Calu3 (cell line): ENCODE measurements at regions of chr20 and their contacts with region 1.

Region 1: DNA sequence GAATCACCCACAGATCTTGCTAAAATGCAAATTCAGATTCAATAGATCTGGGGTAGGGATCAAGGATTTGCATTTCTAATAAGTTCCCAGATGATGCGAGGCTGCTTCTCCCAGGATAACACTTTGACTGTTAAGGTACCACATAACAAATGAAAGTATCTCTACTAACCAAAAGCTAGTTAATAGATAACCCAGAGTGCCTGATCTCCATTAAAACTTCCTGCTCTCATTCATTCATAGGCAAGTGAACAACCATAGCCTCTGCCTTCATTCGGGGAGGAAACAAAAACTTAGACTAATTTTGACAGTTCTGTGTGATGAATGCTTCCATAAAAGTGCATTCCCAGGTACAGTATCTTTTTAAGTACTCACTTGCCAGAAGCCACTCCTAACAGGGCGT is 265.6 kb upstream of the BTBD3 start:
- DNase-seq: no peak
- H3K4me3 Mint-ChIP-seq: no peak overlapping the region
- H3K27ac Mint-ChIP-seq: no peak overlapping the region
- H3K4me1 Mint-ChIP-seq: peaks cover 13% of the 10 kb centered on the region
- H3K27me3 Mint-ChIP-seq: no peaks in the 10 kb centered on the region
- CTCF ChIP-seq: no peak

Region 2: GRCh38 chr20:12482661-12483060 is 830.5 kb after region 1 on chr20:
- CTCF ChIA-PET with region 1: interaction called, 13 read pairs
- intact Hi-C with region 1: no loop called
- DNase-seq: no peak
- H3K4me3 Mint-ChIP-seq: no peak overlapping the region
- H3K27ac Mint-ChIP-seq: no peak overlapping the region
- H3K4me1 Mint-ChIP-seq: no peaks in the 10 kb centered on the region
- H3K27me3 Mint-ChIP-seq: no peaks in the 10 kb centered on the region
- CTCF ChIP-seq: no peak